H1 (cell line): ENCODE measurements at regions of chr16 and their contacts with region 1.

Region 1: DNA sequence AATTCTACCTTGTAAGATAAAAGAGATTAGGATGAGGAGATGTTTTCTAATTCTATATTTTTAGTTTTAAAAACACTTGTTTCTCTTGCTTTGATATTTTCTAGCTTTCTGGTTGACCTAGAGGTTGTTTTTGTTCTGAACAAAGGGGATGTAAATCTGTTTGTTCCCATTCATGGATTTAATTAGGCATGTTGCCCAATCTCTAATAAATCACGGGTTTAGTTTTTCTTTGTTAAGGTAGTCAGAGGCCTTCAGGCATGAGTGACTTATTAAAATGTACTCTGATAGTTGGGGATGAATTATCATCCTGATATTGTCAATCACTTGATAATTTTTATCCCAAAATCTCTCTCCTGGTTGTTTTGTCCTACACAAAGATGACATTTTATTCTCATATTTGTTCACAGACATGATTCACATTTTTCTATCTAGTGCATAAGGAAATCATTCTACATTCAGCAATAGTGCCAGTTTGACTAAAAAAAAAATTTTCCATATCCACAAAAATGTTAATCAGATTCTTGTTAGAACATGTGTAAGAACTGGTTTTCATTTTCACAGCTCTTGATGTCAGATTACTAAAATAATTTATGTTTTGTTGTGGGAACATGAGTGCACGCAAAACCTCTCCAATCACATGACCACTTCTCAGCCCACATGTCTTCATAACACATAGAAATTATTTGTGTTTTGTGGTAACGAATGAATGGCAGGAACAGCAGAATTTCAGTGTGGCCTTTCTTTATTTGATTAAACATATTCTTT is 95.7 kb upstream of the AKTIP start:
- DNase-seq: no peak
- H3K4me3 ChIP-seq: no peak overlapping the region
- H3K27ac ChIP-seq: no peak overlapping the region
- H3K4me1 ChIP-seq: no peaks in the 10 kb centered on the region
- H3K27me3 ChIP-seq: no peaks in the 10 kb centered on the region
- CTCF ChIP-seq: no peak
- EP300 ChIP-seq: no peak
- POLR2A ChIP-seq: no peak
- RAD21 ChIP-seq: no peak

Region 2: GRCh38 chr16:53537626-53538025 is 61.1 kb before region 1 on chr16:
- CTCF ChIA-PET with region 1: no interaction called
- POLR2A ChIA-PET with region 1: no interaction called
- DNase-seq: no peak
- H3K4me3 ChIP-seq: no peak overlapping the region
- H3K27ac ChIP-seq: no peak overlapping the region
- H3K4me1 ChIP-seq: no peaks in the 10 kb centered on the region; a peak in 1 of 7 replicates
- H3K27me3 ChIP-seq: no peaks in the 10 kb centered on the region
- CTCF ChIP-seq: no peak
- EP300 ChIP-seq: no peak
- POLR2A ChIP-seq: no peak
- RAD21 ChIP-seq: no peak

Region 3: GRCh38 chr16:53549970-53550690 is 48.6 kb before region 1 on chr16:
- CTCF ChIA-PET with region 1: interaction called, 13 read pairs
- POLR2A ChIA-PET with region 1: interaction called, 3 read pairs
- DNase-seq: peak; percentile 27 to 60
- H3K4me3 ChIP-seq: no peak overlapping the region
- H3K27ac ChIP-seq: no peak overlapping the region
- H3K4me1 ChIP-seq: peaks cover 0 to 6% (median 2%) of the 10 kb centered on the region in 4 experiments; a peak in 3 of 7 replicates
- H3K27me3 ChIP-seq: peaks cover 0 to 14% (median 13%) of the 10 kb centered on the region in 4 experiments; a peak in 6 of 7 replicates
- CTCF ChIP-seq: peak; percentile 57 to 91 (median 71)
- EP300 ChIP-seq: no peak
- POLR2A ChIP-seq: no peak
- RAD21 ChIP-seq: peak; percentile 93